ENCODE measurements at regions of chr12 and their contacts with region 1.

Region 1: DNA sequence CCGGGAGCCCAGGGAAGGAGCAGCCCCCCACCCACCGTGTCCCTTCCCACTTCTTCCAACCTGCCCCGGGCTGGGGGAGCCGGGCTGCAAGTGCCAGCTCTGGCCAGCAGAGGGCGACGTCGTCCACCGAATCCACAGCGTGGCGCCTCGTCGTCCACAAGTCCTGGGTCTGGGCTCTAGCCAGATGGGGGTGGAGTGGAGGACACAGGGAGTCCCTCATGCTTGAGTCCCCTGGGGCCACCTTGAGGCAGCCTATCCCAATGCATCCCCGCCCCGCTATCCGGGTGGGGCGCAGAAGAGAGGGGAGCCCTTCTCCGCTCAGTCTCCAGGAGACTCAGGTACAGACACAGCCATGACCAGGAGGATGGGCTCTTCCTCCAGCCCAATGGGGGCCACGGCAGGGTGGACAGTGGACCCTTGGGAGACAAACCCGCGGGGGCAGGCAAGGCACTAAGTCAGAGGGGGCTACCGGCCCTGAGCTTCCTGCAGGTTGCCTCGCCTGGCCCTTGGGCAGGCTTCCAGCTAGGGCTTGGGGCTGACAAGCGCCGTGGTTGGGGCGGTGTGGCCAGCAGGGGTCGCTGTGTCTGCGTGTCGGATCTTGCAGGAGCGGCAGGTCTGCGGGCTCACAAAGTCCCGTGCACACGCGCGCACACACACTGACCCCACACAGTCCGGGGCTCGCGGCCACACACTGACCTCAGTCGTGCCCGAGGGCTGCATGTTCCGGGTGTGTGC is 5.5 kb downstream of the AQP5 start:
- DNase-seq: peak; percentile 76
- H3K4me3 ChIP-seq: peak overlapping the region; percentile 40
- H3K27ac ChIP-seq: no peak overlapping the region
- H3K27me3 ChIP-seq: peaks cover 29% of the 10 kb centered on the region
- CTCF ChIP-seq: peak; percentile 90

Region 2: DNA sequence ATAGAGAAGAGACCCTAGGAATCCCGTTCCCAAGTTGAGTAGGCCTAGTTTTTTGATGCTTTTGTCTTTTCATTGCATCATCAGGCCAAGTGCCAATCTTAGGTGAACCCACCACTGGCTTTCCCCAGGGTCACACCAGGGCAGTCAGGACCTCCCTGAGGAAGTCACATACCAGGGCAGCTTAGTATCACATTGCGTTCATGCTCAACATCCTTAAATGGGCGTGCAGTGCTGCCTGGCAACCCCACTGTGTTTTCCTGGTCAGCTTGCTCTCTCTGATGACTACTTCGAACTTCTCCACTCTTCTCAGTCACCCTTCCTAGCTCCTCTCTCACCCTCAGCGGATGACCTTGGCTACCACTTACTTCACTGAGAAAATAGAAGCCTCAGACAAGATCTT is 99.2 kb after region 1 on chr12:
- in situ Hi-C with region 1: loop called (anchors 5 kb)
- DNase-seq: peak; percentile 87
- H3K4me3 ChIP-seq: no peak overlapping the region
- H3K27ac ChIP-seq: no peak overlapping the region
- H3K27me3 ChIP-seq: no peaks in the 10 kb centered on the region
- CTCF ChIP-seq: no peak

Region 3: DNA sequence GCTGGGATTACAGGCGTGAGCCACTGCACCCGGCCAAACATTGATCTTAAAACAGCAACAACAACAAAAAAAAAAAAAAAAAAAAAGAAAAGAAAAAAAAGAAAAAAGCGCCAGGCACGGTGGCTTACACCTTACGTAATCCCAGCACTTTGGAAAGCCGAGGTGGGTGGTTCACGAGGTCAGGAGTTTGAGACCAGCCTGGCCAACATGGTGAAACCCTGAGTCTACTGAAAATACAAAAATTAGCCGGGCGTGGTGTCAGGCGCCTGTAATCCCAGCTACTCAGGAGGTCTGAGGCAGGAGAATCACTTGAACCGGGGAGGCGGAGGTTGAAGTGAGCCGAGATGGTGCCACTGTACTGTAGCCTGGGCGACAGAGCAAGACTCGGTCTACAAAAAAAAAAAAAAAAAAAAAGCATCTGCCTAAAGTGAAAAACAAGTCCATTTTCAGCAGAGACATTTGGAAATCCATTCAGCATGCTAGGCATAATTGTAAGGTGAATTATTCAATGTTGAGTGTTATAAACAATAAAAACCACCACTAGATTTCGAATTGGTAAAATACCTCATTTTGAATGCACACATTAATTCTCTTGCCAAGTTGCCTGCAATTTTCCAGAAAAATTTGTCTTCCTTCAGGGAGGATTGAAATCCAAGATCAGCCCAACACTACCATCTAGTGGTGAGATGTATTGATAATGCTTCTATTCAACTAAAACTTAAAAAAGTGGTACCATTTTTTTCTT is 207.9 kb after region 1 on chr12:
- in situ Hi-C with region 1: loop called (anchors 25 kb)
- DNase-seq: no peak
- H3K4me3 ChIP-seq: no peak overlapping the region
- H3K27ac ChIP-seq: no peak overlapping the region
- H3K27me3 ChIP-seq: no peaks in the 10 kb centered on the region
- CTCF ChIP-seq: peak; percentile 43

Region 4: DNA sequence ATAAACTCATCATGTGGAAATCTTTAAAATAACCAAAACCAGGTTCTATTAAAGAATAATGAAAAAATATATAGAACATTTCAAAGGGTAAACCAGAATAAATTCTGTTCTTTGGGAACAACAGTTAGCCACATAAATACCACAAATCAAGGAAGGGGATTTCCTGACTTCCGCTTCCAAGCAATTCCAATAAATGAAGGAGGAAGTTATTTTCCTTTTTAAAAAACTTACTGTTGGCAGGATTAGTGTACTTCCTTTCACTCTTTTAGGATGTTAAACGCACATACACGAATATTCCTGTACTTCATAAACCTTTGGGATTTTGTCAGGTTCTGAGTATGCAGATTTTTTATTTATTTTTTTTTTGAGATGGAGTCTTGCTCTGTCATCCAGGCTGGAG is 329.8 kb after region 1 on chr12:
- in situ Hi-C with region 1: no loop called
- DNase-seq: no peak
- H3K4me3 ChIP-seq: no peak overlapping the region
- H3K27ac ChIP-seq: no peak overlapping the region
- H3K27me3 ChIP-seq: no peaks in the 10 kb centered on the region
- CTCF ChIP-seq: no peak